ENCODE measurements at regions of chr12 and their contacts with region 1.

Region 1: DNA sequence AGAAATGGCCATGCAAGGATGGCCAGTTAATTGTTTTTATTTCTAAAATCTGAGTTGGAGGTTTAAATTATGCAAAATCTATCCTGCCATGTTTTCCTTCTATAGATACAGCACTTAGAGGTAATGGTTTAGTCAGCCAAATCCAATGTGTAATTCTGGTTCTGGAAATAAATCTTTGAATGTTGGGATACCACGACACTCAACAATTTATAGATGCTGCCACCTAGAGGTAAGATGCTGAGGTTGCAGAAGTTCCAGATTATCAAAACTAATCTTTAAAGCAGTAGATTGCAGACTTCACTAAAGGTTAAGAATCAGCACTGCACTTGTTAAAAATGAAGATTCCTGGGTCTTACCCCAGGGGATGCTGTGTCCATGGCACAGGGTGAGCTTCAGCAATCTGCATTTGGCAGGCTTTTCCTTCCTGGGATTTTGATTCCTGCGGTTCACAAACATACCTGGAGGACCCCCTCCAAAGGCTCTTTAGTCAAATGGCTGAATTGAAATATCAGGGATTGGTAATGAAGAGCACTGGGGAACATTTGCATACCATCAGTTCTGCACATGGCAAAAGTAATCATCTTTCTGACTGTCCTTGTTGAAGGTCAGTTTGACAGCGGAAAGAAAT is 53.4 kb upstream of the ANO4 start:
- DNase-seq: no peak
- H3K4me3 Mint-ChIP-seq: no peak overlapping the region
- H3K27ac Mint-ChIP-seq: no peak overlapping the region
- H3K4me1 Mint-ChIP-seq: no peaks in the 10 kb centered on the region
- H3K27me3 Mint-ChIP-seq: no peaks in the 10 kb centered on the region

Region 2: DNA sequence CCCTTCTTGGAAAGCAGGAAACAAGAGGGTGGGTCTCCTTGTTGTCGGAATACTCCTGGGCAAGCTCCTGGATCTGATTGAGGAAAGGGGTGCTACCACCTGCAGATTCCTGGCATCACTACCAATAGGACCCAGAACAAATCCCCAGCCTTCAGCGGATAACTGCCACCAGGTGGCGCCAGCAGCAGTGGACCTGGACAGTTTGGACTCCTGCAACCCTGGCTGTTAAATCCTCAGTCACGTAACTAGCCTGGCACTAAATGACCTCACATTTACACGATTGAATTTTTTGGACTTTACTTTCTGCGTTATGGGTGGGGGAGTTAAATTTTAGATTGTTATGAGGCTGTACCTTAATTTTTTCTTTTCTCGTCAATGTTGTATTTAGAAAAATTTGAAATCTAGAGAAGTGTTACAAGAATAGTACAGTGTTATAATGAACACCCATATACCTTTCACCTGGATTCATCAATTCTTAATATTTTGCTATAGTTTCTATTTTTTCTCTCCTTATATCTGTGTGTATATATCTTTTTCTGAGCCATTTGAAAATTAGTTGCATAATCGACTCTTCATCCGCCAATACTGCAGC is 72.2 kb before region 1 on chr12:
- intact Hi-C with region 1: loop called (anchors 1 kb)
- DNase-seq: peak; percentile 29
- H3K4me3 Mint-ChIP-seq: no peak overlapping the region
- H3K27ac Mint-ChIP-seq: no peak overlapping the region
- H3K4me1 Mint-ChIP-seq: no peaks in the 10 kb centered on the region
- H3K27me3 Mint-ChIP-seq: no peaks in the 10 kb centered on the region

Region 3: GRCh38 chr12:100706033-100706432 is 35.2 kb before region 1 on chr12:
- intact Hi-C with region 1: no loop called
- DNase-seq: no peak
- H3K4me3 Mint-ChIP-seq: no peak overlapping the region
- H3K27ac Mint-ChIP-seq: no peak overlapping the region
- H3K4me1 Mint-ChIP-seq: no peaks in the 10 kb centered on the region
- H3K27me3 Mint-ChIP-seq: no peaks in the 10 kb centered on the region

Region 4: GRCh38 chr12:100716945-100717732 is 24.1 kb before region 1 on chr12:
- intact Hi-C with region 1: no loop called
- DNase-seq: no peak
- H3K4me3 Mint-ChIP-seq: no peak overlapping the region
- H3K27ac Mint-ChIP-seq: no peak overlapping the region
- H3K4me1 Mint-ChIP-seq: no peaks in the 10 kb centered on the region
- H3K27me3 Mint-ChIP-seq: peaks cover 46% of the 10 kb centered on the region

Region 5: DNA sequence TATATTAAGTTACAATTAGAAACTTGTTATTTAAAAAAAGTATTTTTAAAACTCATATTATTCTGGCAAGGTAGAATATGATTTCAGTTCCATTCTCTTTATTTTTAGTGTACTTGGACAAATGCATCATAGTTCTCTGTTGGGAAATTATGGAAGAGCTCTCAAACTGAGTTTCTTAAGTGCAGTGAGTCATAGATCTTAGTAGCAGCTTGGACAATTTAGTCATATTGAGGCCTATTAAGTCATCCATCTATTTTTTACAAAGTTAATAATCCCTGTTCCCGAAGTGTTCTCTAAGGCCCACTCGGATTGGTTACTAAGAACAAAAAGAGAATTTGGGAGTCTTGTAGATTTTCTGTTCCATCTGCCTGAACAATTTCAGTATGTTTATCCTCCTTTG is 167.3 kb after region 1 on chr12:
- intact Hi-C with region 1: no loop called
- DNase-seq: no peak
- H3K4me3 Mint-ChIP-seq: no peak overlapping the region
- H3K27ac Mint-ChIP-seq: no peak overlapping the region
- H3K4me1 Mint-ChIP-seq: no peaks in the 10 kb centered on the region
- H3K27me3 Mint-ChIP-seq: no peaks in the 10 kb centered on the region